Calu3 (cell line): ENCODE measurements at regions of chr16 and their contacts with region 1.

Region 1: DNA sequence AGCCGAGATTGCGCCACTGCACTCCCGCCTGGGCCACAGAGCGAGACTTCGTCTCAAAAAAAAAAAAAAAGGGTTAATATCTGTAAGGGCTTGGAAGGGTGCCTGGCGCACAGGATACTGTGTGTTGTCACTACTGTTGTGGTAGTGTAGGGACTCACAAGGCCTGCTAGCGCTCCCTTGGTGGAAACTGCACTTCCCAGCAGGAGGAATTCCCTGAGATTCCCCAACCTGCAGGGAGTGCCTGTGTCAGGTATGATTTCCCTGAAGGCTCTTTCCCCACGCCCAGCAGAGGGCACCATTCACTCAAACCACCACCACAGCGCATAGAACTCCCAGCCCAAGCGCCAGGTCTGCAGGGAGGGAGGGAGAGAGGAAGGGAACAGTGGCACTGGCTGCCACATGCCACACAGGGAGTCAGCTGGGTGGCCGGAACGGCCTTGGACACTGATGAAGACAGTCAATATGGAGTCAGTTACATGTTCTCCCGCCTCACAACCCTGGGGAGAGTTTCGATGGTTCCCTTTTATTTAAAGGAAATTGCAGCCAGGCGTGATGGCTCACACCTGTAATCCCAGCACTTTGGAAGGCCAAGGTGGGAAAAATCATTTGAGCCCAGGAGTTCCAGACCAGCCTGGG is 32.7 kb upstream of the CDH1 start:
- DNase-seq: peak; percentile 93
- H3K4me3 Mint-ChIP-seq: no peak overlapping the region
- H3K27ac Mint-ChIP-seq: no peak overlapping the region
- H3K4me1 Mint-ChIP-seq: peaks cover 32% of the 10 kb centered on the region
- H3K27me3 Mint-ChIP-seq: no peaks in the 10 kb centered on the region
- CTCF ChIP-seq: peak; percentile 81

Region 2: GRCh38 chr16:68166264-68166663 is 538.1 kb before region 1 on chr16:
- CTCF ChIA-PET with region 1: no interaction called
- intact Hi-C with region 1: no loop called
- DNase-seq: no peak
- H3K4me3 Mint-ChIP-seq: no peak overlapping the region
- H3K27ac Mint-ChIP-seq: no peak overlapping the region
- H3K4me1 Mint-ChIP-seq: no peaks in the 10 kb centered on the region
- H3K27me3 Mint-ChIP-seq: no peaks in the 10 kb centered on the region
- CTCF ChIP-seq: no peak

Region 3: DNA sequence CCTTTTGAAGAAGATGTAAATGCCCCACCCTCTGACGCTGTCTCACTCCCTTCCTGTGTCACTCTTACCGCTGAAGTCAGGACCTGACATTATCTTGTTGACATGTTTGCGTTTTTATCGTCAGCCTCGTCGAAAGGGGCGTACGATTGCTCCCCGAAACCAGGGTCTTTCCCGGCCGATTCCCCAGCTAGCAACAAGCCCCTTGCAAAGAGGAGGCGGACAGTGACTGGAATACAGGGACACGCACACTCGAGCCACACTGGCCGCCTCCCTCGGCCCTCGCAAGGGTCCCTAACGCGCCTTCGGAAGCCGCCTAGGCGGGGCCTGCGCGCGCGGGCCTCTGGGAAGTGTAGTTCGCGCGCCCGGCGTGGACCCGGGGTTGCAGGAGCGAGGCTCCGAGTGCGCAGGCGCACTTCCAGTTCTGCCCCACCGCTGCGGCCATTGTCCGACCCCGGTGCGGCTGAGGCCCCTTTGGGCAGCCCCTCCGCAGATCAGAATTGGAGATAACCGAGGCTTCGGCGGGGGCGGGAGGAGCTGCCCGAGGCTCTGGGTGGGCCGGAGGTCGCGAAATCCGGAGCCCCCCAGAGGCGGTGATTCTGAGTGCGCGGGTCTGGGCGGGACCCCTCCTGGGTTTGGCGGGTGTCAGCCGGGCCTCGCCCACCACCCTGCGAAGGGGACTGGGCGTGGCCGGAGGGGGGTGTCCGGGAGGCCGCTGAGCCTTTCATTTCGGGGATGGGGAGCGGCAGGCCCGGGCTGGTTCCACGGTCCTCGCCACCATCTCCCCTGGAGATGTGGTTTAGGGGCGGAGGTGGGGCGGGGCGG is 165.3 kb before region 1 on chr16 and contains the start of gene ZFP90:
- CTCF ChIA-PET with region 1: no interaction called
- intact Hi-C with region 1: no loop called
- DNase-seq: peak; percentile 93
- H3K4me3 Mint-ChIP-seq: peak within 1 kb of the TSS; percentile 84
- H3K27ac Mint-ChIP-seq: peak within 1 kb of the TSS; percentile 57
- H3K4me1 Mint-ChIP-seq: peaks cover 9% of the 10 kb centered on the region
- H3K27me3 Mint-ChIP-seq: no peaks in the 10 kb centered on the region
- CTCF ChIP-seq: no peak
- total RNA-seq, gene ZFP90: 30.4 and 32.1 TPM in 2 replicates

Region 4: DNA sequence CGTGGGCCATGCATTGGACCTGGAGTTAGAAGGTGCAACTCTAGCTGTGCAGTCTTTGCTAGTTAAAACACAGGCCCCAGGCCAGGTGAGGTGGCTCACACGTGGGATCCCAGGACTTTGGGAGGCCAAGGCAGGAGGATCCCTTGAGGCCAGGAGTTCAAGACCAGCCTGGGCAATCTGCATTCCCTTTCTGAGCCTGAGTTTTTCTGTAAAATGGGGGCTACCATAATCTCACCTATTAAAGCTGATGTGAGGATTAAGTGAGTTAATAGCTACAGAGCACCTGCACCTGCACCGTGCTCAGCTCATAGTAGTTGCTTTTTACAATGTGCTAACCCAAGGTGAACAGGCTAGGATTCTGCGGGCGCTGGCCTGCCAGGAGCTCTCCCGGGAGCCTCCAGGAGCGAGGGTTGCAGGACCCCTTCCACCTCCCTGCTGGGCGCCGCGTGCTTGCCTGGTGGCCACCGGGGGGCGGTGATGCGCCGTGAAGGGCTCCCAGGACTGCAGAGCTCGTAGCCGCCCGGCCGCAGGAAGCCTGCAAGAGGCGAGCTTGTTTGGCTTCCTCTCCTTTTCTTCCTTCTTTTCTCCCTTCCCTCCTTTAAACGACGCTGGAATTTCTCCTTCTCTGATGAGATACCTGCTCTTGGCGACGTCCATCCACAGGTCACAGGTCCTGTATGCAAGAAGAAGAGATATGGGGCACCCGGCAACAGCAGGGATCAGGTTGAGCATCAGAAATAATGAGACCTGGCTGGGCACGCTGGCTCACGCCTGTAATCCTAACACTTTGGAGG is 114.0 kb before region 1 on chr16:
- CTCF ChIA-PET with region 1: interaction called, 16 read pairs
- intact Hi-C with region 1: loop called (anchors 5 kb)
- DNase-seq: peak; percentile 93
- H3K4me3 Mint-ChIP-seq: peak overlapping the region; percentile 13
- H3K27ac Mint-ChIP-seq: no peak overlapping the region
- H3K4me1 Mint-ChIP-seq: no peaks in the 10 kb centered on the region
- H3K27me3 Mint-ChIP-seq: no peaks in the 10 kb centered on the region
- CTCF ChIP-seq: peak; percentile 90

Region 5: DNA sequence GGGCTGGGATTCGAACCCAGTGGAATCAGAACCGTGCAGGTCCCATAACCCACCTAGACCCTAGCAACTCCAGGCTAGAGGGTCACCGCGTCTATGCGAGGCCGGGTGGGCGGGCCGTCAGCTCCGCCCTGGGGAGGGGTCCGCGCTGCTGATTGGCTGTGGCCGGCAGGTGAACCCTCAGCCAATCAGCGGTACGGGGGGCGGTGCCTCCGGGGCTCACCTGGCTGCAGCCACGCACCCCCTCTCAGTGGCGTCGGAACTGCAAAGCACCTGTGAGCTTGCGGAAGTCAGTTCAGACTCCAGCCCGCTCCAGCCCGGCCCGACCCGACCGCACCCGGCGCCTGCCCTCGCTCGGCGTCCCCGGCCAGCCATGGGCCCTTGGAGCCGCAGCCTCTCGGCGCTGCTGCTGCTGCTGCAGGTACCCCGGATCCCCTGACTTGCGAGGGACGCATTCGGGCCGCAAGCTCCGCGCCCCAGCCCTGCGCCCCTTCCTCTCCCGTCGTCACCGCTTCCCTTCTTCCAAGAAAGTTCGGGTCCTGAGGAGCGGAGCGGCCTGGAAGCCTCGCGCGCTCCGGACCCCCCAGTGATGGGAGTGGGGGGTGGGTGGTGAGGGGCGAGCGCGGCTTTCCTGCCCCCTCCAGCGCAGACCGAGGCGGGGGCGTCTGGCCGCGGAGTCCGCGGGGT is 32.8 kb after region 1 on chr16 and contains the start of gene CDH1:
- CTCF ChIA-PET with region 1: interaction called, 11 read pairs
- intact Hi-C with region 1: loop called (anchors 1 kb)
- DNase-seq: peak; percentile 99
- H3K4me3 Mint-ChIP-seq: peak within 1 kb of the TSS; percentile 89
- H3K27ac Mint-ChIP-seq: peak within 1 kb of the TSS; percentile 85
- H3K4me1 Mint-ChIP-seq: peaks cover 34% of the 10 kb centered on the region
- H3K27me3 Mint-ChIP-seq: no peaks in the 10 kb centered on the region
- CTCF ChIP-seq: no peak
- total RNA-seq, gene CDH1: 328 and 421 TPM in 2 replicates

Region 6: GRCh38 chr16:68756250-68756915 is 52.0 kb after region 1 on chr16:
- CTCF ChIA-PET with region 1: interaction called, 3 read pairs
- intact Hi-C with region 1: loop called (anchors 1 kb)
- DNase-seq: peak; percentile 95
- H3K4me3 Mint-ChIP-seq: peak overlapping the region; percentile 54
- H3K27ac Mint-ChIP-seq: peak overlapping the region; percentile 94
- H3K4me1 Mint-ChIP-seq: peaks cover 81% of the 10 kb centered on the region
- H3K27me3 Mint-ChIP-seq: no peaks in the 10 kb centered on the region
- CTCF ChIP-seq: no peak

Region 7: DNA sequence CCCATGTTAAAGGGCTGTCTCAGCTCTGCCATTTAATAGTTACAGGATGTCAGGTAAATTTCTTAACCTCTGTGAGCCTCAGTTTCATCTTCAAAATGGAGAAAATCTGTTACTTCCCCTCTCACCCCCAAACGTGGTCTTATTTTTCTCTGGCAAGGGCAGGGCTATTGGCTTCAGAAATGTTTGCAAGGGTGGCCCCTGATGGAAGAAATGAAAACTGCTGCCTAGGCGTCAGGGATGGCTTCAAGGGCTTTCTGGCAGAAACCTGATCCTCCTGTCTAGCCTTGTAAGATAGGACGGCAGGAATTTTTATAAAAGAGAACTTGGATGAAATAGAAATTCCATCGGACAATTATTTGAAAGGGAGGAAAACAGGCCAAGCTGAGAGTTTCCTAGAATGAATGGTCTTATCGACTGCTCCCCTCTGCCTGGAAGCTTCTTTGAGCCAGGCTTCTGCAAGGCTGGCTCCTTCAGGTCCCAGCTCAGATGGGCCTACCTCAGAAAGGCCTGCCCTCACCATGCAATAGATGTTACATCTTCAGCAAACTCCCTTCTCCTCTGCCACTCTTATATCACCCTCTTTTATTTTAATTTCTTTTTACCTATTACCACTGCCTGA is 96.0 kb after region 1 on chr16:
- CTCF ChIA-PET with region 1: interaction called, 3 read pairs
- intact Hi-C with region 1: loop called (anchors 1 kb)
- DNase-seq: peak; percentile 87
- H3K4me3 Mint-ChIP-seq: no peak overlapping the region
- H3K27ac Mint-ChIP-seq: peak overlapping the region; percentile 19
- H3K4me1 Mint-ChIP-seq: peaks cover 35% of the 10 kb centered on the region
- H3K27me3 Mint-ChIP-seq: no peaks in the 10 kb centered on the region
- CTCF ChIP-seq: peak; percentile 83

Region 8: DNA sequence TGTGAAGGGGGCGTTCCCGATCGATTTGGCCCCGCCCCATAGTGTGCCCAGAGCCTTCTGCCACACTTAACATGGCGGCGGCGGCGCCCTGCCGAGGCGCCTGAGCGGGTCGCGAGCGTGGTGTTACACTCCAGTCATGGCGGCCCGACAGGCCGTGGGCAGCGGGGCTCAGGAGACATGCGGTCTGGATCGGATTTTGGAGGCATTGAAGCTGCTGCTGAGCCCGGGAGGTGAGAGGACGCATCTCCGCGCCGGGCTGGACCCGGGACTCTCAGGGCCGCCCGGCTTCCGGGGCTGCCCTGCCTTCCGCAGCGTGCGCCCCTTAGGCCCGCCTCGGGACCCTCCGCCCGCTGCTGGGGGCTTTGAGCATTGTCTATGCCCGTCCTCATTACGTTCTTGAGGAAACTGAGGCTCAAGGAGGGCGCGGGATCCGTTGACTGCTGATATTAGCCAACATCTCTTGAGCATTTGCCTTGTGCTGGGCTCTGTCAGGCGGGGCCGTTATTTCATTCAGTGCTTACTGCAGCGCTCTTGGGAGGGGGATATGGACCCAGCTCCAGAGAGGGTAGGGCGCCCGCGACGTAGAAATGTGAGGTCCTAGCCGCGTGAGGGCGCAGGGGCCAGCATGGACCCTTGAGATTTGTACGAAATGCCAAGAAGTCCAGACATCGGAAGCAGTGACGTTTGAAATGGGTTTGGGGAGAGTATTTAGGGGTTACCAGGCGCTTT is 139.3 kb after region 1 on chr16 and contains the start of gene TANGO6:
- CTCF ChIA-PET with region 1: interaction called, 3 read pairs
- intact Hi-C with region 1: loop called (anchors 5 kb)
- DNase-seq: peak; percentile 92
- H3K4me3 Mint-ChIP-seq: peak within 1 kb of the TSS; percentile 69
- H3K27ac Mint-ChIP-seq: peak within 1 kb of the TSS; percentile 27
- H3K4me1 Mint-ChIP-seq: peaks cover 8% of the 10 kb centered on the region
- H3K27me3 Mint-ChIP-seq: no peaks in the 10 kb centered on the region
- CTCF ChIP-seq: peak; percentile 21
- total RNA-seq, gene TANGO6: 18.0 TPM in 2 replicates

Region 9: DNA sequence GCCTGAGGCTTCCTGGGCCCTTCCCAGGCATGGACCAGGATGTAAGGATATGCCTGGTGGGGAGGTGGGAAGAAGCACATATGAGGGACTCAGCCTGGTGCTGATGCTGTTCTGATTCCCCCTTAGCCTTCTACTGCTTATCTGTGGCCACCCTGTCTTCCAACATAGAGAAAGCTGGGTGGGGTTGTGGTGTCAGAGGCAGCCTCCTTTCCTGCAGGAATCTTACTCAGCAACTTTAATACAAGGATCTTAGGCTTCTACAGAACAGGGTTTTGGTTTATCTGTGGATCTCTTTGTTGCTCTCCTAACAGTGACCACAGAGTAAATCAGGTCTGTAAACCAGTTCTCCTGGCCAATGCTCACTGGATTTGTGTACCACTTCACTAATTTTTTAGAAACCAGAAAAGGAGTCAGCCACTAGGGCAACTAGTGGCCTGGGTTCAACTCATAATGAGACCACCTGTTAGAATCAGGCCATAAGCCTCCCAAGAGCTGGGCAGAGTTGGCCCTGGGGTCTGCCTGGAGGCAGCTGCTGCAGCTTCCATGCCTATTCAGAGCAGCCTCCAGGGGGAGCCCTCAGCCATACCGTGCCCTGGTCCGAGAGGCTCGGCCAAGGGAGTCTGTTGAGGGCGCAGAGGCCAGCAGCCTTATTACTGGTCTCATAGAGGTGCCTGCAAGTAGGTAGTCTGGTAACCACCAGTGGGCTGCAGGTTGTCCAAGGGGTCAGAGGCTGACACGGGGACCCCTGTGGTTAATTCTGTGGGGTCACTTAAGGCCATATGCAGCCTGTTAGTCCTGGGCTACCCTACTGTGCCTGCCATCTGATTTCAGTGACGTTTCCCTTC is 408.2 kb after region 1 on chr16:
- CTCF ChIA-PET with region 1: no interaction called
- intact Hi-C with region 1: loop called (anchors 10 kb)
- DNase-seq: peak; percentile 83
- H3K4me3 Mint-ChIP-seq: no peak overlapping the region
- H3K27ac Mint-ChIP-seq: no peak overlapping the region
- H3K4me1 Mint-ChIP-seq: peaks cover 33% of the 10 kb centered on the region
- H3K27me3 Mint-ChIP-seq: no peaks in the 10 kb centered on the region
- CTCF ChIP-seq: peak; percentile 80